ENCODE measurements at regions of chr17 and their contacts with region 1.

Region 1: GRCh38 chr17:75380315-75380714 is 25.2 kb downstream of the GRB2 start:
- DNase-seq: no peak
- H3K4me3 Mint-ChIP-seq: no peak overlapping the region
- H3K27ac Mint-ChIP-seq: no peak overlapping the region
- H3K4me1 Mint-ChIP-seq: peaks cover 31% of the 10 kb centered on the region
- H3K27me3 Mint-ChIP-seq: no peaks in the 10 kb centered on the region

Region 2: GRCh38 chr17:75393523-75394331 is 13.4 kb after region 1 on chr17:
- CTCF ChIA-PET with region 1: interaction called, 13 read pairs
- POLR2A ChIA-PET with region 1: interaction called, 3 read pairs
- DNase-seq: peak; percentile 86
- H3K4me3 Mint-ChIP-seq: peak overlapping the region; percentile 90
- H3K27ac Mint-ChIP-seq: peak overlapping the region; percentile 83
- H3K4me1 Mint-ChIP-seq: peaks cover 75% of the 10 kb centered on the region
- H3K27me3 Mint-ChIP-seq: no peaks in the 10 kb centered on the region

Measured in activated CD4-positive, alpha-beta T cell treated with anti-CD3 and anti-CD28 coated beads, Interleukin-2, amount 10 ng/mL, durations not matched to agents 7 days and 5 days (primary cell).